ENCODE measurements at regions of chr12 and their contacts with region 1.

Region 1: GRCh38 chr12:62793256-62794217 is 141.4 kb downstream of the PPM1H start:
- DNase-seq: peak; percentile 50
- H3K4me3 Mint-ChIP-seq: no peak overlapping the region
- H3K27ac Mint-ChIP-seq: no peak overlapping the region
- H3K4me1 Mint-ChIP-seq: peaks cover 3% of the 10 kb centered on the region
- H3K27me3 Mint-ChIP-seq: peaks cover 35% of the 10 kb centered on the region

Region 2: GRCh38 chr12:62435303-62436163 is 358.0 kb before region 1 on chr12:
- intact Hi-C with region 1: loop called (anchors 1 kb)
- DNase-seq: peak; percentile 18
- H3K4me3 Mint-ChIP-seq: peak overlapping the region; percentile 72
- H3K27ac Mint-ChIP-seq: no peak overlapping the region
- H3K4me1 Mint-ChIP-seq: peaks cover 19% of the 10 kb centered on the region
- H3K27me3 Mint-ChIP-seq: peaks cover 52% of the 10 kb centered on the region

Region 3: GRCh38 chr12:62522984-62523383 is 270.6 kb before region 1 on chr12:
- intact Hi-C with region 1: loop called (anchors 2 kb)
- DNase-seq: no peak
- H3K4me3 Mint-ChIP-seq: no peak overlapping the region
- H3K27ac Mint-ChIP-seq: no peak overlapping the region
- H3K4me1 Mint-ChIP-seq: peaks cover 31% of the 10 kb centered on the region
- H3K27me3 Mint-ChIP-seq: no peaks in the 10 kb centered on the region

Region 4: GRCh38 chr12:62581288-62582064 is 212.1 kb before region 1 on chr12:
- intact Hi-C with region 1: loop called (anchors 1 kb)
- DNase-seq: no peak
- H3K4me3 Mint-ChIP-seq: no peak overlapping the region
- H3K27ac Mint-ChIP-seq: no peak overlapping the region
- H3K4me1 Mint-ChIP-seq: no peaks in the 10 kb centered on the region
- H3K27me3 Mint-ChIP-seq: no peaks in the 10 kb centered on the region

Region 5: DNA sequence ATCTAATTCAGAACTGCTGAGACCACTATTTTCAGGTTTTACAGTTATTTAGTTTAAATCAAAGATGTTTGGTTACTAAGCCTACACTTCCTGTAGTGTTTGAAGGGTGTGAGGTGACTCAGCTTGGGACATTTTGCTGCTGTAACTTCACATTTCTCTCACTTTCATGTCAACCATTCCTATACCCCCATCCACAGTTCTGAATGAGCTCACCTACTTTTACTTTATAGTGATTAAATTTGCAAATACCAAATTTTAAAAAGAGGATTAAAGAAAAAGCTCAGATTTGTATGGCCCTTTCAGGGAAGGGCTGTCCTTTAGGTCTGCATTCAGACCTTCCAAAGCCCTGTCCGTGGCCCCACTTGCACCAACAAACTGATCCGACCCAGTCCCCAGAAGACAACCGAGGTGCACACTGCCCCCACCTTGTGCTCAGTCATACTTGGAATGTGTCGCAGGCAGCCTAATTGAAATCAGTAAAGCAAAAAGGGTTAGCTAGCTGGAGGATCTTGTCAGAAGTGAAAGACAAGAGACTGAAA is 152.6 kb before region 1 on chr12:
- intact Hi-C with region 1: loop called (anchors 5 kb)
- DNase-seq: no peak
- H3K4me3 Mint-ChIP-seq: peak overlapping the region; percentile 1
- H3K27ac Mint-ChIP-seq: peak overlapping the region; percentile 75
- H3K4me1 Mint-ChIP-seq: peaks cover 11% of the 10 kb centered on the region
- H3K27me3 Mint-ChIP-seq: peaks cover 17% of the 10 kb centered on the region

Region 6: GRCh38 chr12:62758216-62758615 is 35.3 kb before region 1 on chr12:
- intact Hi-C with region 1: loop called (anchors 5 kb)
- DNase-seq: no peak
- H3K4me3 Mint-ChIP-seq: no peak overlapping the region
- H3K27ac Mint-ChIP-seq: no peak overlapping the region
- H3K4me1 Mint-ChIP-seq: peaks cover 23% of the 10 kb centered on the region
- H3K27me3 Mint-ChIP-seq: peaks cover 10% of the 10 kb centered on the region